Right ventricle myocardium inferior (tissue), 1 donor: ENCODE measurements at regions of chr16 and their contacts with region 1.

Region 1: DNA sequence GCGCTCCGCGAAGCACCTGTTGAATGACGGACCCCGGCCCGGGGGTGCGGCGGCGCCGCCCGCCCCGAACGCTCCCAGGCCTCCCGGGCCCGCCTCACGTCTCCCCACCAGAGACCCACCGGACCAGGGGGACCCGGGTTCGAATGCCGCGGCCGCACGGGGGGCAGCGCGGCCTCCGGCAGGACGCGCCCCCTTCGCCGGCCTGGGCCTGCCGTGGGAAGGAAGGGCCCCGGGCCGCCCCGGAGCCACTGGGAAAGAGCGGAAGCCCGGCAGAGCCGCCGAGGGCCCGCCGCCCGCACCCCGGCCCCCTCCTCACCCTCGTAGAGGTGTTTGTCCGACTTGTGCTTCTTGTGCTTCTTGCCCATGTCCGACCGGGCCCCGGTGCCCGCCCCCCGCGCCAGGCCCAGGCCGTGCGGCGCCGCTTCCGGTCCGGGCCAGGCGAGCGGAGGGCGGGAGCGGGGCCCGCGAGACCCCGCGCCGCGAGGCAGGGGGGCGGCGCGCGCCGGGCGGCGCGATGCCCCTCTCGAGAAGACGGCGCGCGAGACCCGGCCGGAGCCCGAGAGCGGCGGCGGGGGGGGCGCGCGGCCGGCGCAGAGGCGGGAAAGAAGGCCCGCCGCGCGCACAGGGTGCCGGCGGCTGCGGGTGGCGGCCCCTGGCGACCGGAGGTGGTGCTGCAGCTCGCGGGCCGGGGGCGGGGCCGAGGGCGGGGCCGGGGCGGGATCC is at the start of gene BRD7:
- DNase-seq: peak; percentile 84
- ATAC-seq: peak; percentile 83
- total RNA-seq, gene BRD7: 46.6 TPM

Region 2: DNA sequence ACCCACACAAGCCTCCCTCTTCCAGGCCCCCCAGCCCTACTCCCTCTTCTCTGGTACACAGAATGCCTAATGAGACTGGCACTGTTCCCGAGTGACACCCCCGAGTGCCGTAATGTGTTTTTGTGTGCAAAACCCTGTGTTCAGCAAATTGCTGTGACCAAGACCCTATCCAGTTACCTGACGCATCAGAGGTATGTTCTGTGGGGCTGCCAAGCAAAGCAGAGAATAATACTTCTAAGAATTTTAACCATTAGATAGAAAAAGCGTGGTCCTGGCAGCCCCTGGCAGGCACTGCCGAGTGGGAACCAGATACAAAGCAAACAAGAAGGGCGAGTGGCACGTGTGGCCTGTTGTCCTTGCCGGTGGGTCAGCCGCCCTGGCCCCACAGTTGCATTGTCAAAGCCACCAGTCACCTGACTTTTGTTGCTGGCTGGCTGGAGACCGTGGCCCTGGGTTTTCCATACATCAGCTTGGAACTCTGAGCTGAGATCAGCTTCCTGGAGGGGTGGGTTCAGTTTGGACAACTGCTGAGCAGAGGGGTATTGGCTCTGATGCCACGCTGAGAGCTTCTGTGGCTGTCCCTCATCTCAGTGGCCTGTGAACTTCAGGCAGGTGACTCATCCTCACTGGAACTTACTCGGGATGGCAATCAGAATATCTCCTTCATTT is 69.3 kb after region 1 on chr16:
- intact Hi-C with region 1: no loop called
- DNase-seq: no peak
- ATAC-seq: no peak

Region 3: GRCh38 chr16:50627419-50627818 is 258.8 kb after region 1 on chr16:
- intact Hi-C with region 1: loop called (anchors 5 kb)
- DNase-seq: no peak
- ATAC-seq: peak; percentile 83

Region 4: GRCh38 chr16:50741808-50742575 is 373.4 kb after region 1 on chr16 and contains the start of gene CYLD:
- intact Hi-C with region 1: loop called (anchors 10 kb)
- DNase-seq: peak; percentile 100
- ATAC-seq: peak; percentile 99
- total RNA-seq, gene CYLD: 27.5 TPM